ENCODE measurements at regions of chr4 and their contacts with region 1.

Region 1: GRCh38 chr4:73653695-73654106 is 33.5 kb upstream of the RASSF6 start:
- DNase-seq: no peak
- H3K4me3 ChIP-seq: no peak overlapping the region
- H3K27ac ChIP-seq: no peak overlapping the region
- H3K4me1 ChIP-seq: peaks cover 0 to 31% (median 10%) of the 10 kb centered on the region in 3 donors
- H3K27me3 ChIP-seq: no peaks in the 10 kb centered on the region
- CTCF ChIP-seq: peak in 5 of 6 experiments; percentile 46 to 69 (median 62)
- POLR2A ChIP-seq: no peak

Region 2: DNA sequence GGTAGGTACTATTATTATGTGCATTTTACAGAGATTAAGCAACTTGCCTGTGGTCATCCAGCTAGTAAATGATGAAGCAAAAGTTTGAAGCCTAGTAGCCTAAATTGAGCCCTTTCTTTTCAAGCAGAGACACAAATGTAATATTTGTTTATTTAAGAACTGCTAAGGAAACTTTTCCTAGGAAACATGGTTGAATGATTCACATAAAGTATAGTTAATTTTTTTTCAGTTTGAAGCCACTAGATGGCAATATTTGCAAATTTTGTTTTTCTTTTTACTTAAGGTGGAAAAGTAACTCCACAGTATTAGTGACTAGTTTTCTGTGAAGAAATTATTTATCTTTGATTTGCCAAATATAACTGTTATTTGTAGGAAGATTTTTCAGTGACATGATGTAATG is 342.3 kb before region 1 on chr4:
- intact Hi-C with region 1: loop called (anchors 10 kb)
- DNase-seq: no peak
- H3K4me3 ChIP-seq: no peak overlapping the region
- H3K27ac ChIP-seq: no peak overlapping the region
- H3K4me1 ChIP-seq: peaks cover 0 to 4% (median 0%) of the 10 kb centered on the region in 3 donors
- H3K27me3 ChIP-seq: no peaks in the 10 kb centered on the region
- CTCF ChIP-seq: peak in 4 of 6 experiments; percentile 19 to 48 (median 30)
- POLR2A ChIP-seq: no peak

Region 3: GRCh38 chr4:73573794-73574406 is 79.8 kb before region 1 on chr4:
- intact Hi-C with region 1: loop called (anchors 5 kb)
- DNase-seq: no peak
- H3K4me3 ChIP-seq: no peak overlapping the region
- H3K27ac ChIP-seq: no peak overlapping the region
- H3K4me1 ChIP-seq: peaks cover 0 to 23% (median 5%) of the 10 kb centered on the region in 3 donors
- H3K27me3 ChIP-seq: no peaks in the 10 kb centered on the region
- CTCF ChIP-seq: peak; percentile 47 to 86 (median 73)
- POLR2A ChIP-seq: no peak

Region 4: GRCh38 chr4:74133786-74134499 is 480.2 kb after region 1 on chr4:
- intact Hi-C with region 1: loop called (anchors 10 kb)
- DNase-seq: peak; percentile 2
- H3K4me3 ChIP-seq: no peak overlapping the region
- H3K27ac ChIP-seq: no peak overlapping the region
- H3K4me1 ChIP-seq: no peaks in the 10 kb centered on the region
- H3K27me3 ChIP-seq: no peaks in the 10 kb centered on the region
- CTCF ChIP-seq: peak; percentile 12 to 86 (median 68)
- POLR2A ChIP-seq: no peak

Measured in esophagus squamous epithelium (tissue), 5 donors.